H1 (cell line): ENCODE measurements at regions of chr7 and their contacts with region 1.

Region 1: GRCh38 chr7:131604841-131605279 is 48.4 kb upstream of the PODXL start:
- DNase-seq: peak in 1 of 2 experiments; percentile 88
- H3K4me3 ChIP-seq: peak overlapping the region; percentile 6 to 47 (median 11); a peak in 5 of 8 replicates
- H3K27ac ChIP-seq: peak overlapping the region; percentile 96
- H3K4me1 ChIP-seq: peaks cover 27 to 51% (median 45%) of the 10 kb centered on the region in 4 experiments
- H3K27me3 ChIP-seq: no peaks in the 10 kb centered on the region
- CTCF ChIP-seq: no peak
- EP300 ChIP-seq: no peak
- POLR2A ChIP-seq: peak in 1 of 2 experiments; percentile 13; a peak in 2 of 3 replicates
- RAD21 ChIP-seq: no peak

Region 2: DNA sequence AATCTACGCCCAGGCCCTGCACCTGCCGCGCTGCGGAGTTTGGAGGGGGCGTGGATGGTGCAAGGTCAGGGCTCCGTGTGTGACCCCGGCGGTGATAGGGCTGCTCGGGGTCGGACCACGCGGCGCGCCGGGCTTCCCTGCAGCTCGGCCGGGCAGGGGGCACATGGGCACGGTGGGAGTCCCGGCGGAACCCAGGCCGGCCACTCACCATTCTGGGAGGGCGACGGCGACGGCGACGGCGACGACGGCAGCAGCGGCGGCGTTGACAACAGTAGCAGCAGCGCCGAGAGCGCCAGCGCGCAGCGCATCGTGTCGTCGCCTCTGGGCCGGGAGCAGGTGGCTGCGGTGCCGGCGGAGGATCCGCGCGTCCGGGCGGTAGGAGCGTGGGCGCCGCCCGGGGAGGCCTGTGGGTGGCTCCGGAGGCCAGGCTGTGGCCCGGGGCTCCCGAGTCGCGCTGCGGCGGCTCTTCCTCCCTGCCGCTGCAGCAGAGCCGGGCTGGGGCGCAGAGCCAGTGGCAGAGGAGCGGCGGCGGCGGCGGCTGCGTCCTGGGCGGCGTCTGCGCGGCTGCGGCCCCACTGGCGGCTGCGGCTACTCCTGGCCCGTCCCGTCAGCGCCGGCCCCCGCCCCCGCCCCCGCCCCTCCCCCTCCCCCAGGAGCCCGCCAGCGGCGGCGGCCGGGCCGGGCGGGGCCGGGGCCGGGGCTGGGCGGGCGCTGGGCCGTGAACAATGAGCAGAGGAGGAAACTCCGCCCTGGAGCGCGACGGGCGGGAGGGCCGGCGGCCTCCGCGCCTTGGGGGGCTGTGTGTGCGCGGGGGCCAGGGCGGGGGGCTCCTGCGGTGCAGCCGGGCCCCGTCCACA is 48.6 kb before region 1 on chr7 and contains the start of gene PODXL:
- CTCF ChIA-PET with region 1: interaction called, 103 read pairs
- POLR2A ChIA-PET with region 1: interaction called, 108 read pairs
- DNase-seq: peak in 1 of 2 experiments; percentile 83
- H3K4me3 ChIP-seq: peak within 1 kb of the TSS; percentile 84 to 96 (median 92)
- H3K27ac ChIP-seq: peak within 1 kb of the TSS; percentile 51; the same call in 1 of the 2 replicates
- H3K4me1 ChIP-seq: peaks cover 4 to 26% (median 17%) of the 10 kb centered on the region in 4 experiments
- H3K27me3 ChIP-seq: no peaks in the 10 kb centered on the region
- CTCF ChIP-seq: no peak
- EP300 ChIP-seq: no peak
- POLR2A ChIP-seq: no peak
- RAD21 ChIP-seq: peak in 1 of 2 experiments; percentile 15; a peak in 1 of 4 replicates
- total RNA-seq, gene PODXL: 925 and 945 TPM in 2 replicates

Region 3: GRCh38 chr7:131581241-131582051 is 23.4 kb before region 1 on chr7:
- CTCF ChIA-PET with region 1: interaction called, 4 read pairs
- POLR2A ChIA-PET with region 1: interaction called, 15 read pairs
- DNase-seq: peak in 1 of 2 experiments; percentile 60
- H3K4me3 ChIP-seq: no peak overlapping the region
- H3K27ac ChIP-seq: no peak overlapping the region; the same call in 1 of the 2 replicates
- H3K4me1 ChIP-seq: peaks cover 0 to 17% (median 9%) of the 10 kb centered on the region in 4 experiments; a peak in 5 of 7 replicates
- H3K27me3 ChIP-seq: no peaks in the 10 kb centered on the region; a peak in 1 of 7 replicates
- CTCF ChIP-seq: peak in 2 of 3 experiments; percentile 7 to 14; a peak in 2 of 4 replicates
- EP300 ChIP-seq: no peak
- POLR2A ChIP-seq: no peak
- RAD21 ChIP-seq: no peak

Region 4: GRCh38 chr7:131619336-131620305 is 14.8 kb after region 1 on chr7:
- CTCF ChIA-PET with region 1: interaction called, 26 read pairs
- POLR2A ChIA-PET with region 1: interaction called, 57 read pairs
- DNase-seq: no peak
- H3K4me3 ChIP-seq: no peak overlapping the region
- H3K27ac ChIP-seq: peak overlapping the region; percentile 25; the same call in 1 of the 2 replicates
- H3K4me1 ChIP-seq: peaks cover 4 to 24% (median 12%) of the 10 kb centered on the region in 4 experiments
- H3K27me3 ChIP-seq: no peaks in the 10 kb centered on the region
- CTCF ChIP-seq: no peak
- EP300 ChIP-seq: no peak
- POLR2A ChIP-seq: no peak
- RAD21 ChIP-seq: no peak

Region 5: DNA sequence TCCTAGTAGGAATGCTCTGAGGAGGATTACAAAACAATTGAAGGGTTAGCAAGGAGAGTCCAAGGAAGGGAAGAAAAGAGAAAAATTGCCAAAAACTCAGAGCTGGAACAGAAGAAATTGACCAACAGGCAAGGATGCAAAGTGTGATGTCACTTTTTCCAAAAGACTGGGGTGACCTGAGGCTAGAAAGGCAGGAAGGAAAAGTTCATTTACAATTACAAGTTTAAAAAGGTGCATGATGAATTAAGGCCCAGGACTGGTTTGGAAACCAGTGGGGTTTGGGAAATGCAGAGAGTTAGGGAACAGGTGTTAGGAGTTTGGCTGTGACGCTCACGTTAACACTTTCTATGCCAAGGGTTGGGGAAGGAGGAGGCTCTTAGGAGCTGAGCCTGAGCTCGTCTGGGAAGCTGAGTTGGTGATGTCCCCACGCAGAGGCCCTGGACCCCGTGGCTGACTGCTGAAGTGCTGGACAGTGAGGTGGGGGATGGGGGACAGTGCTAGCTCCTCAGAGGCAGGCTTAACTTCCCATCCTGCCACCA is 44.2 kb after region 1 on chr7:
- CTCF ChIA-PET with region 1: interaction called, 6 read pairs
- POLR2A ChIA-PET with region 1: interaction called, 18 read pairs
- DNase-seq: no peak
- H3K4me3 ChIP-seq: no peak overlapping the region
- H3K27ac ChIP-seq: no peak overlapping the region
- H3K4me1 ChIP-seq: peaks cover 0 to 28% (median 21%) of the 10 kb centered on the region in 4 experiments; a peak in 6 of 7 replicates
- H3K27me3 ChIP-seq: no peaks in the 10 kb centered on the region; a peak in 1 of 7 replicates
- CTCF ChIP-seq: no peak
- EP300 ChIP-seq: no peak
- POLR2A ChIP-seq: no peak
- RAD21 ChIP-seq: no peak; a peak in 1 of 4 replicates

Region 6: GRCh38 chr7:131699323-131699722 is 94.5 kb after region 1 on chr7:
- CTCF ChIA-PET with region 1: no interaction called
- POLR2A ChIA-PET with region 1: no interaction called
- DNase-seq: no peak
- H3K4me3 ChIP-seq: no peak overlapping the region
- H3K27ac ChIP-seq: no peak overlapping the region
- H3K4me1 ChIP-seq: no peaks in the 10 kb centered on the region
- H3K27me3 ChIP-seq: no peaks in the 10 kb centered on the region
- CTCF ChIP-seq: no peak
- EP300 ChIP-seq: no peak
- POLR2A ChIP-seq: no peak
- RAD21 ChIP-seq: no peak